Calu3 (cell line): ENCODE measurements at regions of chrX and their contacts with region 1.

Region 1: GRCh38 chrX:104742345-104742744 is 176.3 kb downstream of the IL1RAPL2 start:
- DNase-seq: no peak
- H3K4me3 Mint-ChIP-seq: no peak overlapping the region
- H3K27ac Mint-ChIP-seq: no peak overlapping the region
- H3K4me1 Mint-ChIP-seq: peaks cover 9% of the 10 kb centered on the region
- H3K27me3 Mint-ChIP-seq: no peaks in the 10 kb centered on the region
- CTCF ChIP-seq: no peak

Region 2: GRCh38 chrX:104641183-104641582 is 101.2 kb before region 1 on chrX:
- CTCF ChIA-PET with region 1: no interaction called
- intact Hi-C with region 1: no loop called
- DNase-seq: peak; percentile 8
- H3K4me3 Mint-ChIP-seq: no peak overlapping the region
- H3K27ac Mint-ChIP-seq: no peak overlapping the region
- H3K4me1 Mint-ChIP-seq: peaks cover 11% of the 10 kb centered on the region
- H3K27me3 Mint-ChIP-seq: no peaks in the 10 kb centered on the region
- CTCF ChIP-seq: peak; percentile 14

Region 3: GRCh38 chrX:104913348-104913747 is 171.0 kb after region 1 on chrX:
- CTCF ChIA-PET with region 1: no interaction called
- intact Hi-C with region 1: loop called (anchors 10 kb)
- DNase-seq: no peak
- H3K4me3 Mint-ChIP-seq: no peak overlapping the region
- H3K27ac Mint-ChIP-seq: no peak overlapping the region
- H3K4me1 Mint-ChIP-seq: no peaks in the 10 kb centered on the region
- H3K27me3 Mint-ChIP-seq: no peaks in the 10 kb centered on the region
- CTCF ChIP-seq: no peak